Activated CD4-positive, alpha-beta memory T cell treated with anti-CD3 and anti-CD28 coated beads for 36 hours (primary cell): ENCODE measurements at regions of chr2 and their contacts with region 1.

Region 1: GRCh38 chr2:112254466-112255239 is at the start of gene ZC3H8:
- DNase-seq: peak; percentile 97
- H3K4me3 Mint-ChIP-seq: peak within 1 kb of the TSS; percentile 78
- H3K27ac Mint-ChIP-seq: peak within 1 kb of the TSS; percentile 87
- H3K4me1 Mint-ChIP-seq: peaks cover 21% of the 10 kb centered on the region
- H3K27me3 Mint-ChIP-seq: no peaks in the 10 kb centered on the region
- total RNA-seq, gene ZC3H8: 13.0 to 16.0 TPM

Region 2: DNA sequence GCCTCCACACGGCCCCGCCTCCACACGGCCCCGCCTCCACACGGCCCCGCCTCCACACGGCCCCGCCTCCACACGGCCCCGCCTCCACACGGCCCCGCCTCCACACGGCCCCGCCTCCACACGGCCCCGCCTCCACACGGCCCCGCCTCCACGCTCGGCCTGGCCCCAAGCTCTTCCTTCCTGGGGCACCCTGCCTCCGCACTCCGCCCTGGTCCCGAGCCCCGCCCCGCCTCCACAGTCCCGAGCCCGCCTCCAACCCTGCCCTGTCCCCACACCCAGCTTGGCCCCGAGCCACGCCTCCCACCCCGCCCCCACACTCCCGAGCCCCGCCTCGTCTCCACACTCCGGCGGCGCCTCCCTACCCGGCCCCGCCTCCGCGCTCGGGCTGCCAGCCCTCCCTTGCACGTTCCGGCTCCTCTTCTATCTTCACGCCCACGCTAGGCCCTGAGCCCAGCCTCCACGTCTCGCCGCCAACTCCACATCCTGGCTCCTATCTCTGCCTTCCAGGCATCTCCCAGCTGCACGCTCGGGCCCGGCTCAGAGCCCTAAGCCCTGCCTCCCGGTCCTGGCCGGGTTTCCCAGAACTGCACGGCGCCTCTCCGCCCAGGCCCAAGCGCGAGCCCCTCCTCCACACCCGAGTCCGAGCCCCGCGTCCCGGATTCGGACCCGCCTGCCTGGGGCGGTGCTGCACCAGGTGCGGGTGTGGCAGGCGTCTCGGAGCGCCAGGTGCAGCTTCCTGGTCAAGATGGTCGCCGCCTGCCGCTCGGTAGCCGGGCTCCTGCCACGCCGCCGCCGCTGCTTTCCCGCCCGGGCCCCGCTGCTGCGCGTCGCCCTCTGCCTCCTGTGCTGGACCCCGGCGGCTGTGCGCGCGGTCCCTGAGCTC is 199.6 kb before region 1 on chr2 and contains the start of gene TMEM87B:
- CTCF ChIA-PET with region 1: interaction called, 3 read pairs
- POLR2A ChIA-PET with region 1: no interaction called
- intact Hi-C with region 1: loop called (anchors 2 kb)
- DNase-seq: peak; percentile 99
- H3K4me3 Mint-ChIP-seq: peak within 1 kb of the TSS; percentile 96
- H3K27ac Mint-ChIP-seq: peak within 1 kb of the TSS; percentile 98
- H3K4me1 Mint-ChIP-seq: peaks cover 39% of the 10 kb centered on the region
- H3K27me3 Mint-ChIP-seq: no peaks in the 10 kb centered on the region
- total RNA-seq, gene TMEM87B: 22.3 to 24.1 TPM

Region 3: DNA sequence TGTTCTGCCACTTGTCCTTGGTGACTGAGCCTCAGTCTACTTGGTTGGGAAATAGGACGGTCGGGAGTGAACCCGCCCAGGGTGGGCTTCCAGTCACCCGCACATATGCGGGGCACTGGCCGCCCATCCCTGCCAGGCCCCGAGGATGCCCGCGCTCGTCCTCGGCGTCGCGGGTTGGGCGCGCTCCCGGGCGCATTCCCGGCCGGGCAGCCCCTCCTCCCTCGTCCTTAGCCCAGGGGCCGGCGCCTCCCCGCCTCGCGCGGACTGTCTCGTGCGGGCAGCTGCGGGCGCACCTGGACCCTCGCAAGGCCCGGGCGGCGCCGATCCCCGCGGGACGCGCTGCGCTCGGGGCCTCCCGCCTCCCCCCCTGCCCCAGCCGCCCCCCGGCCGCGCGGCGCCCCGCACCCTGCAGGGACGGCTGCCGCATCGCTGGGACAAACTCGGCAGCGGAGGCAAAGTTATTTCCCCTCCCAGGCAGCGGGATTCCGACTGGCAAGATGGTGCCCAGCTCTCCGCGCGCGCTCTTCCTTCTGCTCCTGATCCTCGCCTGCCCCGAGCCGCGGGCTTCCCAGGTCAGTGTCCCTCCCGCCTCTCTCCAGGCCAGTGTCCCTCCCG is 116.4 kb before region 1 on chr2 and contains the start of gene FBLN7:
- CTCF ChIA-PET with region 1: no interaction called
- POLR2A ChIA-PET with region 1: no interaction called
- intact Hi-C with region 1: no loop called
- DNase-seq: no peak
- H3K4me3 Mint-ChIP-seq: peak within 1 kb of the TSS; percentile 40
- H3K27ac Mint-ChIP-seq: peak within 1 kb of the TSS; percentile 15
- H3K4me1 Mint-ChIP-seq: peaks cover 6% of the 10 kb centered on the region
- H3K27me3 Mint-ChIP-seq: peaks cover 18% of the 10 kb centered on the region
- total RNA-seq, gene FBLN7: 38.9 to 40.2 TPM

Region 4: GRCh38 chr2:112156152-112156986 is 98.3 kb before region 1 on chr2:
- CTCF ChIA-PET with region 1: no interaction called
- POLR2A ChIA-PET with region 1: no interaction called
- intact Hi-C with region 1: no loop called
- DNase-seq: peak; percentile 76
- H3K4me3 Mint-ChIP-seq: peak overlapping the region; percentile 59
- H3K27ac Mint-ChIP-seq: peak overlapping the region; percentile 82
- H3K4me1 Mint-ChIP-seq: peaks cover 51% of the 10 kb centered on the region
- H3K27me3 Mint-ChIP-seq: no peaks in the 10 kb centered on the region

Region 5: GRCh38 chr2:112181571-112182290 is 72.9 kb before region 1 on chr2:
- CTCF ChIA-PET with region 1: interaction called, 9 read pairs
- POLR2A ChIA-PET with region 1: interaction called, 4 read pairs
- intact Hi-C with region 1: loop called (anchors 1 kb)
- DNase-seq: peak; percentile 78
- H3K4me3 Mint-ChIP-seq: peak overlapping the region; percentile 88
- H3K27ac Mint-ChIP-seq: peak overlapping the region; percentile 98
- H3K4me1 Mint-ChIP-seq: peaks cover 66% of the 10 kb centered on the region
- H3K27me3 Mint-ChIP-seq: no peaks in the 10 kb centered on the region

Region 6: DNA sequence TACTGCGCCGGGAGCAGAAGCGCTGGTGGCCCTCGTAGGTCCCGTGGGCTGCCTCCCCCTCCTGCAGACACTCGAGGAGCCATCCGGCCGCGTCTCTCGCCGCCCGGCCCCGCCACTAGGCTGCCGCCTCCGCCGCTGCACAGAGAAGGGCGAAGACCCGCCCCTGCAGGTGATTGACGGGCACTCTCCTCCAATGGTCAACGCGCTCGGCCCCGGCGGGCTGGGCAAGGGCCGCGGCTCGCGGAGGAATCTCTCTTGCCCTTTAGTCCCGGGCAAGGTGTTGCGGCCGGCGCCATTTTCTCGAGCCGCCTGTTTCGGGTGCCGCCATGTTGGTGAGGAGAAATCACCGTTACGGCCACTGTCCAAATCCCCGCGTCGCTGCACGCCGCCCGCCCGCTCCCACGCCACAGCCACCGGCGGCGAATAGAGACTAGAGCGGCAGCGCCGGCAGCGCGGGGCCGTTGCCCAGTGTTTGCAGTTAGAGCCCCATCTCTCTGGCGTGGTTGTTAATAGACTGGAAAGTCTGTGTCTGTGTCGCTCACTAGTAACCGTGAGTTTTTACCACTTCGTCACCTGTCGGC is 20.7 kb after region 1 on chr2 and contains the start of gene ZC3H6:
- CTCF ChIA-PET with region 1: interaction called, 8 read pairs
- POLR2A ChIA-PET with region 1: interaction called, 9 read pairs
- intact Hi-C with region 1: loop called (anchors 1 kb)
- DNase-seq: peak; percentile 100
- H3K4me3 Mint-ChIP-seq: peak within 1 kb of the TSS; percentile 93
- H3K27ac Mint-ChIP-seq: peak within 1 kb of the TSS; percentile 97
- H3K4me1 Mint-ChIP-seq: peaks cover 17% of the 10 kb centered on the region
- H3K27me3 Mint-ChIP-seq: no peaks in the 10 kb centered on the region
- total RNA-seq, gene ZC3H6: 14.4 to 15.0 TPM

Region 7: GRCh38 chr2:112542123-112542983 is 287.7 kb after region 1 on chr2 and contains the start of gene POLR1B:
- CTCF ChIA-PET with region 1: no interaction called
- POLR2A ChIA-PET with region 1: no interaction called
- intact Hi-C with region 1: loop called (anchors 10 kb)
- DNase-seq: peak; percentile 84
- H3K4me3 Mint-ChIP-seq: no peak within 1 kb of the TSS
- H3K27ac Mint-ChIP-seq: no peak within 1 kb of the TSS
- H3K4me1 Mint-ChIP-seq: peaks cover 21% of the 10 kb centered on the region
- H3K27me3 Mint-ChIP-seq: no peaks in the 10 kb centered on the region
- total RNA-seq, gene POLR1B: 50.7 to 55.3 TPM

Region 8: GRCh38 chr2:112701052-112701451 is 446.4 kb after region 1 on chr2:
- CTCF ChIA-PET with region 1: no interaction called
- POLR2A ChIA-PET with region 1: no interaction called
- intact Hi-C with region 1: no loop called
- DNase-seq: no peak
- H3K4me3 Mint-ChIP-seq: no peak overlapping the region
- H3K27ac Mint-ChIP-seq: no peak overlapping the region
- H3K4me1 Mint-ChIP-seq: peaks cover 12% of the 10 kb centered on the region
- H3K27me3 Mint-ChIP-seq: peaks cover 1% of the 10 kb centered on the region

Region 9: GRCh38 chr2:113834051-113834730 is 1579.5 kb after region 1 on chr2:
- CTCF ChIA-PET with region 1: no interaction called
- POLR2A ChIA-PET with region 1: no interaction called
- intact Hi-C with region 1: no loop called
- DNase-seq: no peak
- H3K4me3 Mint-ChIP-seq: no peak overlapping the region
- H3K27ac Mint-ChIP-seq: no peak overlapping the region
- H3K4me1 Mint-ChIP-seq: no peaks in the 10 kb centered on the region
- H3K27me3 Mint-ChIP-seq: no peaks in the 10 kb centered on the region